ENCODE measurements at regions of chr10 and their contacts with region 1.

Region 1: GRCh38 chr10:104349623-104350126 is 4.0 kb upstream of the CFAP58 start:
- DNase-seq: peak in 1 of 4 donors; percentile 56
- ATAC-seq: no peak
- H3K4me3 ChIP-seq: no peak overlapping the region
- H3K27ac ChIP-seq: peak overlapping the region in 1 of 4 donors; percentile 11
- H3K4me1 ChIP-seq: peaks cover 21% of the 10 kb centered on the region
- H3K27me3 ChIP-seq: no peaks in the 10 kb centered on the region
- CTCF ChIP-seq: no peak
- POLR2A ChIP-seq: no peak

Region 2: DNA sequence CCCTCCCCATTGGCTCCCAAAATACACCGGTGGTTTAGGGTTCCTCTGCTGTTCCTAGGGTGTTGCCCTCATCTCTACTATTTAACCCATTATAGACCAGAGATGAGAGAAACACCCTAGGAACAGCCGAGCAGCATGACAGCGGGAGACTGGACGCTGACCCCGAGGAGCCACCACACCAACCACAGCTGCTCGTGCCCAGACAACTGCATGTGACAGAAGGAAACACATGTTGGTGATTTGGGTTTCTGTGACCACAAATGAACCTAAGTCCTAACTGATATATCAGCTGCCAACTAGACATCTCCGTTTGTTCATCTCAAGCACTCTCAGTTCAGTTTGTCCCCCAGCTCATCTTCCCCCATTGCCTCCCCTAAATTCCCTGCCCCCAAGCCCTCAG is 130.9 kb before region 1 on chr10:
- intact Hi-C with region 1: no loop called
- DNase-seq: no peak
- ATAC-seq: no peak
- H3K4me3 ChIP-seq: no peak overlapping the region
- H3K27ac ChIP-seq: no peak overlapping the region
- H3K4me1 ChIP-seq: no peaks in the 10 kb centered on the region
- H3K27me3 ChIP-seq: no peaks in the 10 kb centered on the region
- CTCF ChIP-seq: no peak
- POLR2A ChIP-seq: no peak

Region 3: GRCh38 chr10:104291439-104291951 is 58.2 kb before region 1 on chr10:
- intact Hi-C with region 1: loop called (anchors 5 kb)
- DNase-seq: peak; percentile 89 to 92 (median 89)
- ATAC-seq: peak; percentile 99
- H3K4me3 ChIP-seq: no peak overlapping the region
- H3K27ac ChIP-seq: no peak overlapping the region
- H3K4me1 ChIP-seq: peaks cover 8% of the 10 kb centered on the region
- H3K27me3 ChIP-seq: no peaks in the 10 kb centered on the region
- CTCF ChIP-seq: peak; percentile 98 to 100 (median 99)
- POLR2A ChIP-seq: no peak

Region 4: GRCh38 chr10:104308439-104308903 is 41.2 kb before region 1 on chr10:
- intact Hi-C with region 1: loop called (anchors 5 kb)
- DNase-seq: no peak
- ATAC-seq: no peak
- H3K4me3 ChIP-seq: no peak overlapping the region
- H3K27ac ChIP-seq: no peak overlapping the region
- H3K4me1 ChIP-seq: peaks cover 16% of the 10 kb centered on the region
- H3K27me3 ChIP-seq: no peaks in the 10 kb centered on the region
- CTCF ChIP-seq: no peak
- POLR2A ChIP-seq: no peak